PC-9 (cell line): ENCODE measurements at regions of chr9 and their contacts with region 1.

Region 1: DNA sequence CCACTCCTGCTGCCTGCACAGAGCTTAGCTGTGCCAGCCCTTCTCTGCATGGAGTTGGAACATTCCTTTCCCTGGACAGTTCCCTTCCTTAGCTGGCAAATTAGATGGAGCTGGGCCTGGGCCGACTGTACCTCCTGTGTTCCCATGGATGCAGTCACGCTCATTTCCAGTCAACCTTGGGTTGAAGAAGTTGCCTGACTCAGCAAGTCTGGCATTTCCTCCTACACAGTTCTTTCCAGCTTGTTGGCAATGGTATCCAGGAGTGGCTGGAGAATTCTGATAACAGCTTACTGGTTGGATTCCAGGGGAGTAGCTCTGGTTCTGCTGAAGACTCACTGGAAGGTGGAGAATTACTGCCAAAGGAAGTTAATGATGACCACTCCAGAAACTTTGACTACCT is 9.2 kb upstream of the TAF1L start:
- DNase-seq: peak; percentile 47 to 50
- H3K4me3 ChIP-seq: no peak overlapping the region
- H3K27ac ChIP-seq: no peak overlapping the region
- H3K4me1 ChIP-seq: peaks cover 4% of the 10 kb centered on the region; the same call in 1 of the 2 replicates
- H3K27me3 ChIP-seq: no peaks in the 10 kb centered on the region
- CTCF ChIP-seq: no peak

Region 2: GRCh38 chr9:32487981-32488380 is 156.7 kb before region 1 on chr9:
- CTCF ChIA-PET with region 1: no interaction called
- POLR2A ChIA-PET with region 1: interaction called, 29 read pairs
- intact Hi-C with region 1: no loop called
- DNase-seq: no peak
- H3K4me3 ChIP-seq: no peak overlapping the region
- H3K27ac ChIP-seq: no peak overlapping the region
- H3K4me1 ChIP-seq: no peaks in the 10 kb centered on the region
- H3K27me3 ChIP-seq: no peaks in the 10 kb centered on the region
- CTCF ChIP-seq: no peak

Region 3: DNA sequence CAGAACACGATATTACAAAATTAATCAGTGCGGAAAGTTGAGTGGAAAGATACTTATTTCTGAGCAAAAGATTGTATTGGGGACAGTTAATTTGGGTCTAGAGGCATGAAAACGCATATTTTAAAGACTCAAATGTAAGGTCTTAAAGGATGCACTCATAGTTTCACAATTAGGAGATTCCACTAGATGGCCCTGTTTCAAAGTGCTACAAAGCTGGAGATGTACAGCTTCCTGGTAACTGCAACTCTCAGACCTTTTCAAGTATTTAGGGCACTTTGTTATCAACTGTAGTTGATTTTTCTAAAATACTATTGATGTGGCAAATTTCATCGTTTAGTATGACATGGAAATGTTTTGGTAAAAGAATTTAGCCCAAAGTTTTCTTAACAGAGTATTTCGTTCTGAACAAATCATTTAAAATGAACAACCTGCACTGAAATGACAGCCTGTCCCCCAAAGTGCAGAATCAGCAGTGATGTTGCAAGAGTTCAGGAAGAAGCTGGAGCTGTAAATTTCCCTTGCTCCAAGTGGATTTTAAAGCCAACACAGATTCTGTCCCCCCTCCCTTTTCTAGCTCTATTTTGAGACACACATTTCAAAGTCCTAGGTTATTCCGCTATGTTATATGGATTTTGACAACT is 55.5 kb before region 1 on chr9:
- CTCF ChIA-PET with region 1: no interaction called
- POLR2A ChIA-PET with region 1: no interaction called
- intact Hi-C with region 1: no loop called
- DNase-seq: peak; percentile 3 to 55
- H3K4me3 ChIP-seq: no peak overlapping the region
- H3K27ac ChIP-seq: no peak overlapping the region
- H3K4me1 ChIP-seq: peaks cover 20% of the 10 kb centered on the region
- H3K27me3 ChIP-seq: no peaks in the 10 kb centered on the region
- CTCF ChIP-seq: peak; percentile 65